ENCODE measurements at regions of chr12 and their contacts with region 1.

Region 1: GRCh38 chr12:63151623-63152320 is 771 bp upstream of the AVPR1A start:
- DNase-seq: peak; percentile 24
- ATAC-seq: peak; percentile 87
- H3K4me3 ChIP-seq: no peak overlapping the region
- H3K27ac ChIP-seq: no peak overlapping the region
- H3K4me1 ChIP-seq: no peaks in the 10 kb centered on the region
- H3K27me3 ChIP-seq: peaks cover 27% of the 10 kb centered on the region
- CTCF ChIP-seq: peak; percentile 58
- POLR2A ChIP-seq: no peak
- RAD21 ChIP-seq: no peak; the same call in 1 of the 2 replicates

Region 2: GRCh38 chr12:63164911-63165310 is 13.1 kb after region 1 on chr12:
- CTCF ChIA-PET with region 1: interaction called, 10 read pairs
- POLR2A ChIA-PET with region 1: no interaction called
- dilution Hi-C with region 1: no loop called
- in situ Hi-C with region 1: no loop called
- intact Hi-C with region 1: no loop called
- DNase-seq: no peak
- ATAC-seq: no peak
- H3K4me3 ChIP-seq: no peak overlapping the region
- H3K27ac ChIP-seq: no peak overlapping the region
- H3K4me1 ChIP-seq: no peaks in the 10 kb centered on the region
- H3K27me3 ChIP-seq: no peaks in the 10 kb centered on the region
- CTCF ChIP-seq: no peak
- POLR2A ChIP-seq: no peak
- RAD21 ChIP-seq: no peak

Region 3: DNA sequence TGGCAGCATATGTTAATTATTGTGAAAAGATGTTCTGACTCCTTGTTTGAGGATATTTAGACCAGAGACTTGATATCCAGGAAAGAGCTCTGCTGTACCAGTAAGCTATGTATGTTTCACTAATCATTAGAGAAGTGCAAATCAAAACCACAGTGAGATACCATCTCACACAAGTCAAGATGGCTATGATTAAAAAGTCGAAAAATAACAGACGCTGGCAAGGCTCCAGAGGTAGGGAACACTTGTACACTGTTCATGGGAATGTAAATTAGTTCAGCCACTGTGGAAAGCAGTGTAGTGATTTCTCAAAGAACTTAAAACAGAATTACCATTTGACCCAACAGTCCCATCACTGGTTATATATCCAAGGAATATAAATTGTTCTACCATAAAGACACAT is 344.9 kb after region 1 on chr12:
- CTCF ChIA-PET with region 1: no interaction called
- POLR2A ChIA-PET with region 1: no interaction called
- dilution Hi-C with region 1: no loop called
- in situ Hi-C with region 1: no loop called
- intact Hi-C with region 1: no loop called
- DNase-seq: no peak
- ATAC-seq: no peak
- H3K4me3 ChIP-seq: no peak overlapping the region
- H3K27ac ChIP-seq: no peak overlapping the region
- H3K4me1 ChIP-seq: no peaks in the 10 kb centered on the region
- H3K27me3 ChIP-seq: no peaks in the 10 kb centered on the region
- CTCF ChIP-seq: no peak
- POLR2A ChIP-seq: no peak
- RAD21 ChIP-seq: no peak